ENCODE measurements at regions of chr6 and their contacts with region 1.

Region 1: GRCh38 chr6:160930547-160931377 is 60.8 kb upstream of the MAP3K4 start:
- DNase-seq: peak; percentile 91
- H3K4me3 Mint-ChIP-seq: peak overlapping the region; percentile 71
- H3K27ac Mint-ChIP-seq: peak overlapping the region; percentile 71
- H3K4me1 Mint-ChIP-seq: peaks cover 11% of the 10 kb centered on the region
- H3K27me3 Mint-ChIP-seq: no peaks in the 10 kb centered on the region
- CTCF ChIP-seq: peak; percentile 94

Region 2: GRCh38 chr6:160733050-160733646 is 197.6 kb before region 1 on chr6:
- CTCF ChIA-PET with region 1: interaction called, 23 read pairs
- POLR2A ChIA-PET with region 1: interaction called, 3 read pairs
- intact Hi-C with region 1: loop called (anchors 5 kb)
- DNase-seq: peak; percentile 60
- H3K4me3 Mint-ChIP-seq: no peak overlapping the region
- H3K27ac Mint-ChIP-seq: no peak overlapping the region
- H3K4me1 Mint-ChIP-seq: peaks cover 6% of the 10 kb centered on the region
- H3K27me3 Mint-ChIP-seq: no peaks in the 10 kb centered on the region
- CTCF ChIP-seq: peak; percentile 85

Region 3: DNA sequence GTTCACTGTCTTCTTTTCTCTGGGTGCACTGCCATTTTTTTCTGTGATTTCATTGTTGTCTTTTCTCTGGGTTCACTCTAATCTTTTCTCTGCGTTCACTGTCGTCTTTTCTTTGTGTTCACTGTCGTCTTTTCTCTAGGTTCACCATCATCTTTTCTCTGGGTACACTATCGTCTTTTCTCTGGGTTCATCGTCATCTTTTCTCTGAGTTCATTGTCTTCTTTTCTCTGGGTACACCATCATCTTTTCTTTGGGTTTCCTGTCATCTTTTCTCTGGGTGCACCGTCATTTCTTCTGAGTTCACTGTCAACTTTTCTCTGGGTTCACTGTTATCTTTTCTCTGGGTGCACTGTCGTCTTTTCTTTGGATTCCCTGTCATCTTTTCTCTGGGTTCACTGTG is 76.8 kb before region 1 on chr6:
- CTCF ChIA-PET with region 1: no interaction called
- POLR2A ChIA-PET with region 1: no interaction called
- intact Hi-C with region 1: no loop called
- DNase-seq: no peak
- H3K4me3 Mint-ChIP-seq: no peak overlapping the region
- H3K27ac Mint-ChIP-seq: no peak overlapping the region
- H3K4me1 Mint-ChIP-seq: no peaks in the 10 kb centered on the region
- H3K27me3 Mint-ChIP-seq: no peaks in the 10 kb centered on the region
- CTCF ChIP-seq: no peak

Region 4: DNA sequence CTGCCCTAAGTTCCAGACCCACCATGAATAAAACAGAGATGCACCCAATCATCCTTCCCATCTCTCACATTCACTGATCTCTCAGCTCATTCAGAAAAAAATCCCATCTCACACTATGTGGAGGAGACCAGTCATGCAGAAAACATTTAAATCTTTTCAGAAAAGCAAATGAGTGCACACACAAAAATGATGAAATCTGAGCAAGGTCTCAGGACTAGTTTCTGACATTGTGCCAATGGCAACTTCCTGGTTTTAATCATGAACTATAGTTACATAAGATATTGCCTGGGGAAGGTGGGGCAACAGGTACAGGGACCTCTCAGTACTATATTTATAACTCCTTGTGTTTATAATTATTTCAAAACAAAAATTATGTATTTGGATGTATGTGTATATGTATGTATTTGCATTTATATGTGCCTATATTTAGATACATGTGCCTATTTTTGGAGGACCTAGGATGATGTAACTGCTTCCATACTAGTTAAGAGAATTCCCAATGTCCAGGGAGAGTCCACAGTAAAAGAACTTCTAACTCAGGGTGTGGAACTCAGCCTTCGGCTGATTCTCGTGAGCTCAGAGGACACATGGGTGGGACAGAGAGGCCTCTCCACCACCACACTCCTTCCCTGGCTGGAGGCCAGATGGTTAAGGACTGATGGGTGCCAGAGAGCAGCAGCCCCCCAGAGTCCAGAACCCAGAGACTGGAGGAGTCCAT is 10.9 kb before region 1 on chr6:
- CTCF ChIA-PET with region 1: interaction called, 15 read pairs
- POLR2A ChIA-PET with region 1: interaction called, 7 read pairs
- intact Hi-C with region 1: no loop called
- DNase-seq: peak; percentile 97
- H3K4me3 Mint-ChIP-seq: no peak overlapping the region
- H3K27ac Mint-ChIP-seq: peak overlapping the region; percentile 59
- H3K4me1 Mint-ChIP-seq: peaks cover 23% of the 10 kb centered on the region
- H3K27me3 Mint-ChIP-seq: no peaks in the 10 kb centered on the region
- CTCF ChIP-seq: no peak

Region 5: GRCh38 chr6:160992061-160992979 is 61.6 kb after region 1 on chr6:
- CTCF ChIA-PET with region 1: interaction called, 117 read pairs
- POLR2A ChIA-PET with region 1: interaction called, 65 read pairs
- intact Hi-C with region 1: loop called (anchors 1 kb)
- DNase-seq: peak; percentile 78
- H3K4me3 Mint-ChIP-seq: peak overlapping the region; percentile 91
- H3K27ac Mint-ChIP-seq: peak overlapping the region; percentile 87
- H3K4me1 Mint-ChIP-seq: peaks cover 9% of the 10 kb centered on the region
- H3K27me3 Mint-ChIP-seq: no peaks in the 10 kb centered on the region
- CTCF ChIP-seq: peak; percentile 40

Region 6: DNA sequence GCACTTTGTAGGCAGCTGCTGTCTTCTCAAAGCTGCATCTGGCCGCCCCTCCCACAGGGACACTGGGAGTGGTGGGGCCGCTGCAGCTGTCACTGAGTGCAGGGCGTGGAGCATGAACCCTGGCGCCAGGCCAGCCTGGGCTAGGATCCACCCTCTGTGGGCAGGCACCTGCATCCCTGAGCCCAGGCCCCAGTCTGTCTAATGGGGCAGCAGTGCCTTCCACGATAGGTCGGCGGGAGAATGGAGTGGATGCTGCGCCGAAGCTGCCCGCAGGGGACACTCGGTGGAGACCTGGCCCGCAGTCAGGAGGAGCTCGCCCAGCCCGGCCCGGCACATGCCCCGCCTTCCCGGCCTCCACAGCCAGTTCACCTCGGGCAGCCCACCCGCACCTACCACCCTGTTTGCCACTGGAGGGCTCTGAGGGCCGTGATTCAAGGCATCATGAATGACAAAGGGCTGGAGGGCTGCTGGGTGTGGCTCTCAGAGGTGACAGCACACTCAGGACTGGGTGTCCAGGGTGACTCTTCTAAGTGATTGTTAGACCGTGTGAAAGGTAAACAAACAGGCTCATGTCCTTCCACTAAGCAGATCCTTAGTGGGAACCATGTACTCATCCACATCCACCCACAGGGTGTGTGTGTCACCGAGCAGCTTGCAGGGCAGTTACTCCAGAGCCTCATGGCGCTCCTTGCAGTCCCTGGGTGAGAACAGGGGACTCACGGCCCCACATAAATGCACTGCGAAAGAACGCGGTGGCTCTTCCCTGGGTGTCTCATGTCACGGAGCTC is 209.2 kb after region 1 on chr6:
- CTCF ChIA-PET with region 1: interaction called, 5 read pairs
- POLR2A ChIA-PET with region 1: no interaction called
- intact Hi-C with region 1: loop called (anchors 10 kb)
- DNase-seq: peak; percentile 55
- H3K4me3 Mint-ChIP-seq: no peak overlapping the region
- H3K27ac Mint-ChIP-seq: no peak overlapping the region
- H3K4me1 Mint-ChIP-seq: no peaks in the 10 kb centered on the region
- H3K27me3 Mint-ChIP-seq: no peaks in the 10 kb centered on the region
- CTCF ChIP-seq: peak; percentile 36